ENCODE measurements at regions of chr3 and their contacts with region 1.

Region 1: DNA sequence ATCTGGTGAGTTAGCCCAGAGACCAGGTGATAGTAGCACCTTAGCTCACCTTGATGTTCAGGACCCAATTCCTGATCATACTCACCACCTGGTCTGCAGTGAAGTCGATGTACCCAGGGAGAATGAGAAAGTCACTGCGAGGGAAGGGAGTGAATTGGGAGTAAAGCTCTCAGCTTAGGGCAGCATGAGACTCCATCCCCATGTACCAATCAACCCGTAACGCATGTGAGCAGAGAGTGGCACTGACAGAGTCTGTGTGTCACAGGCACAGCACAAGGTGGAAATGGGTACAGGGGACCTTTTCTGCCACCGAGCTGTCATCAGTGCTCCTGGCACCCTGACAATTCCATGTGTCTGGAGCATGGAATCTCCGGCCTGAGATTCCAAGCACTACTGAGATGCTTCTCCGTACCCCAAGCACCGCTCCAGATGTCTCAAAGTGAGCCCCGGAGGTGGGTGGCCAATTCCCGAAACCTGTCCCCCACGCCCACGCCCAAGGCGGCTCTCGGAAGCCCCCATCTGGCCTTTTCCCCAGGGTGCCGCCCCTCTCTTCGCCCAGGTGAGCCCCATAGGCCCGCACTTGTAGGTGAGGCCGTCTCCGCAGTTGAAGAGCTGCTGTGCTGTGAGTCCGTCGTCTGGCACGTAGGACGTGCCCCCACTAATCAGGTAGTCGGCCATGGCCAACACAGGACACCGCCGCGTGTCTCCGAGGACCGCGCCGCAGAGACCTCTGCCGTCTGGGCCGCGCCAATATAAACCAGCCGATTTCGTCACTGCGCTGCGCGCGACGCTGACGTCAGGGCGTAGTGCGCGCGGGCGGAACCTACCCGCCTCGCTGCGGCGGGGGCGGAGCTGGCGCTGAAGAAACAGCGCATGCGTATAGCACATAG is at the start of gene IMPDH2:
- DNase-seq: peak; percentile 89 to 95 (median 93)
- ATAC-seq: peak; percentile 97
- H3K4me3 ChIP-seq: peak within 1 kb of the TSS; percentile 74
- H3K4me3 Mint-ChIP-seq: peak within 1 kb of the TSS; percentile 86 to 96 (median 94)
- H3K27ac ChIP-seq: peak within 1 kb of the TSS; percentile 98
- H3K27ac Mint-ChIP-seq: peak within 1 kb of the TSS; percentile 92 to 100 (median 98)
- H3K4me1 ChIP-seq: peaks cover 10 to 11% of the 10 kb centered on the region in 2 donors
- H3K4me1 Mint-ChIP-seq: peaks cover 7 to 52% (median 34%) of the 10 kb centered on the region in 7 donors
- H3K27me3 ChIP-seq: no peaks in the 10 kb centered on the region
- H3K27me3 Mint-ChIP-seq: no peaks in the 10 kb centered on the region
- total RNA-seq, gene IMPDH2: 102 to 206 (median 121) TPM

Region 2: GRCh38 chr3:48811524-48811923 is 217.4 kb before region 1 on chr3:
- CTCF ChIA-PET with region 1: no interaction called
- POLR2A ChIA-PET with region 1: interaction called, 3 read pairs
- intact Hi-C with region 1: loop called in 1 of 2 experiments (anchors 1 kb)
- DNase-seq: no peak
- ATAC-seq: no peak
- H3K4me3 ChIP-seq: no peak overlapping the region
- H3K4me3 Mint-ChIP-seq: peak overlapping the region in 5 of 10 donors; percentile 16 to 51 (median 33)
- H3K27ac ChIP-seq: peak overlapping the region; percentile 64
- H3K27ac Mint-ChIP-seq: peak overlapping the region; percentile 64 to 97 (median 89)
- H3K4me1 ChIP-seq: peaks cover 16 to 18% of the 10 kb centered on the region in 2 donors
- H3K4me1 Mint-ChIP-seq: peaks cover 22 to 47% (median 40%) of the 10 kb centered on the region in 7 donors
- H3K27me3 ChIP-seq: no peaks in the 10 kb centered on the region
- H3K27me3 Mint-ChIP-seq: no peaks in the 10 kb centered on the region

Region 3: GRCh38 chr3:49158108-49158709 is 129.3 kb after region 1 on chr3:
- CTCF ChIA-PET with region 1: no interaction called
- POLR2A ChIA-PET with region 1: no interaction called
- intact Hi-C with region 1: loop called in 1 of 2 experiments (anchors 5 kb)
- DNase-seq: peak in 8 of 9 donors; percentile 40 to 68 (median 59)
- ATAC-seq: peak; percentile 89
- H3K4me3 ChIP-seq: no peak overlapping the region
- H3K4me3 Mint-ChIP-seq: no peak overlapping the region
- H3K27ac ChIP-seq: peak overlapping the region; percentile 20
- H3K27ac Mint-ChIP-seq: peak overlapping the region in 6 of 9 donors; percentile 3 to 82 (median 18)
- H3K4me1 ChIP-seq: no peaks in the 10 kb centered on the region
- H3K4me1 Mint-ChIP-seq: peaks cover 0 to 10% (median 5%) of the 10 kb centered on the region in 7 donors
- H3K27me3 ChIP-seq: no peaks in the 10 kb centered on the region
- H3K27me3 Mint-ChIP-seq: no peaks in the 10 kb centered on the region

Region 4: DNA sequence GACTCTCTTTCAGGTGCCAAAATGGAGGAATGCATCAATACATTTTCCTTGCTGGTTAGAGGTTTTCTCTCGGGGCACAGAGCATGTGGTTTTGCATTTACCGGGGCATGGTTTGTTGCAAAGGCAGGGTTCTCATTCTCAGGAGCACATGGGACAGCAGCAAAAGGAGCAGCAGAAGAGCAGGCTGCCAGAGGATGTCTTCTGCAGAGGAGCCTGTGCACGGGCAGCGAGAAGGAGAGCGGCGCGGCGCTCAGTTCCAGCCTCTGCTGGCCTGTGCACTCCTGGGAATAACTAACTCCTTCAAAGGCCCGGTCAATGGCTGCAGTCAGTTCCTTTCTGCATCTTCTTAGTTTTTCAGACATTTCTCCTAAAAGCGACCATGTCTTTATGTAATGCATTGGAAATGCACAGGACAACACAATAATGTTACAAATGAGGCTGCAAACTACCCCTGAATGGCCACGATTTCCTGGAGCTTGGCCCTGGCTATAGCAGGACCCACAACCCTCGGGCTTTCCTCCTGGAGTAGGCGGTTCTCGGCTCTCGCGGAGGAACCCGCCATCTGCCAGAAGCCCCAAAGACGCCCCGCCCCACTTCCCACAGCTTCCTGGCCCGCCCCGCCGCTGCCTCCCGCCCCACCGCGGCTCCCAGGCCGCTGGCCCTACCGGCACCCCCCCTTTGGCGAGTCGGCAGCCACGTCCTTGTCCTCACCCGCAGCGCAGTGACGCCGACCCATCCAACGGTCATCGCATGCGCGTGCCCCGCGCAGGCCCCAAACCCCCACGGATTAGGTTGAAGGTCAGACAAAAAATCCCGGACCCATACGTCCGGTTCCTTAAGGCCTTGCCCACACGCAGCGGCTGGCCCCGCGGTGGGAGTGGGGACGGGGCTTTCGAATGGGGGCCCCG is 247.8 kb after region 1 on chr3 and contains the start of gene C3orf62:
- CTCF ChIA-PET with region 1: no interaction called
- POLR2A ChIA-PET with region 1: no interaction called
- intact Hi-C with region 1: loop called in 1 of 2 experiments (anchors 2 kb)
- DNase-seq: peak; percentile 41 to 85 (median 55)
- ATAC-seq: peak; percentile 91
- H3K4me3 ChIP-seq: peak within 1 kb of the TSS; percentile 77
- H3K4me3 Mint-ChIP-seq: peak within 1 kb of the TSS; percentile 80 to 91 (median 87)
- H3K27ac ChIP-seq: peak within 1 kb of the TSS; percentile 84
- H3K27ac Mint-ChIP-seq: peak within 1 kb of the TSS; percentile 81 to 94 (median 88)
- H3K4me1 ChIP-seq: peaks cover 10% of the 10 kb centered on the region in 2 donors
- H3K4me1 Mint-ChIP-seq: peaks cover 6 to 33% (median 27%) of the 10 kb centered on the region in 7 donors
- H3K27me3 ChIP-seq: no peaks in the 10 kb centered on the region
- H3K27me3 Mint-ChIP-seq: no peaks in the 10 kb centered on the region
- total RNA-seq, gene C3orf62: 8.6 to 14.5 (median 10.9) TPM